Activated CD4-positive, alpha-beta T cell treated with anti-CD3 and anti-CD28 coated beads for 36 hours (primary cell): ENCODE measurements at regions of chr17 and their contacts with region 1.

Region 1: GRCh38 chr17:80892019-80892855 is 99.4 kb upstream of the CHMP6 start:
- DNase-seq: peak; percentile 94
- ATAC-seq: peak; percentile 78
- H3K4me3 Mint-ChIP-seq: peak overlapping the region; percentile 72
- H3K27ac Mint-ChIP-seq: peak overlapping the region; percentile 97
- H3K4me1 Mint-ChIP-seq: peaks cover 73% of the 10 kb centered on the region
- H3K27me3 Mint-ChIP-seq: no peaks in the 10 kb centered on the region

Region 2: DNA sequence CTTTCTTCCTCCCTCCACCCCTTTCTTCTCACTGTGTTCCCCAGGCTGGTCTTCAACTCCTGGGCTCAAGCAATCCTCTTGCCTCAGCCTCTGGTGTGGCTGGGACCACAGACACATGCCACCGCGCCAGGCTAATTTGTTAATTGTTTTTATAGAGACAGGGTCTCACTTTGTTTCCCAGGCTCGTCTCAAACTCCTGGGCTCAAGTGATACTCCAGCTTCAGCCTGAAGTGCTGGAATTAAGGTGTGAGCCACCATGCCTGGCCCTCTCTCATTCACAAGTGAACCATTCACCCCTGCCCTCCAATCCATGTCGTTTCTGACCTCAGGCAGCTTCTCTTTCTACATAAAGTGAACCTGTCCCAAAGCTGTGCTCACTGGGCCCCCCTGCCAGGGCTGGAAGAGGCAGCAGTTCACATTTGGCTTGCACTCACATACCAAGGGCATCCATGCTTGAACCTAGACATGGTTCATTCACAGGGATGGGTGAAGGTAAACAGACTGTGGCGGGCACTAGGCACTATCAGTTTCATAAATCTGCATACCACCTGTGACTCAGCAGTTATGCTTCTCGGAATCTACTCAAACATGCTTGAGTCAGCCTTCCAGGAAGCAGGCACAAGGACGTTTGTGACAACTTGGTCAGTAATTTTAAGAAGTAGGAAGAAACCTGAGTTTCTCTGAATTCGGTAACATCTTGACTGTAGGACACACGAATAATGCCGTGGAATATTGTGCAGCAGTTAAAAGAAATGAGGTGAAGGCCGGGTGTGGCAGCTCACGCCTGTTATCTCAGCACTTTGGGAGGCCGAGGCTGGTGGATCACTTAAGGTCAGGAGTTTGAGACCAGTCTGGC is 637.6 kb before region 1 on chr17:
- CTCF ChIA-PET with region 1: no interaction called
- POLR2A ChIA-PET with region 1: no interaction called
- intact Hi-C with region 1: loop called in 1 of 2 experiments (anchors 5 kb)
- DNase-seq: peak; percentile 83
- ATAC-seq: peak; percentile 62
- H3K4me3 Mint-ChIP-seq: peak overlapping the region; percentile 64
- H3K27ac Mint-ChIP-seq: peak overlapping the region; percentile 97
- H3K4me1 Mint-ChIP-seq: peaks cover 71% of the 10 kb centered on the region
- H3K27me3 Mint-ChIP-seq: no peaks in the 10 kb centered on the region

Region 3: GRCh38 chr17:80591788-80592187 is 300.4 kb before region 1 on chr17:
- CTCF ChIA-PET with region 1: no interaction called
- POLR2A ChIA-PET with region 1: no interaction called
- intact Hi-C with region 1: loop called in 1 of 2 experiments (anchors 2 kb)
- DNase-seq: no peak
- ATAC-seq: peak; percentile 56
- H3K4me3 Mint-ChIP-seq: no peak overlapping the region
- H3K27ac Mint-ChIP-seq: peak overlapping the region; percentile 28
- H3K4me1 Mint-ChIP-seq: peaks cover 68% of the 10 kb centered on the region
- H3K27me3 Mint-ChIP-seq: no peaks in the 10 kb centered on the region

Region 4: GRCh38 chr17:80649678-80650672 is 242.3 kb before region 1 on chr17:
- CTCF ChIA-PET with region 1: no interaction called
- POLR2A ChIA-PET with region 1: no interaction called
- intact Hi-C with region 1: loop called in 1 of 2 experiments (anchors 1 kb)
- DNase-seq: peak; percentile 92
- ATAC-seq: peak; percentile 85
- H3K4me3 Mint-ChIP-seq: peak overlapping the region; percentile 17
- H3K27ac Mint-ChIP-seq: peak overlapping the region; percentile 92
- H3K4me1 Mint-ChIP-seq: peaks cover 69% of the 10 kb centered on the region
- H3K27me3 Mint-ChIP-seq: no peaks in the 10 kb centered on the region

Region 5: DNA sequence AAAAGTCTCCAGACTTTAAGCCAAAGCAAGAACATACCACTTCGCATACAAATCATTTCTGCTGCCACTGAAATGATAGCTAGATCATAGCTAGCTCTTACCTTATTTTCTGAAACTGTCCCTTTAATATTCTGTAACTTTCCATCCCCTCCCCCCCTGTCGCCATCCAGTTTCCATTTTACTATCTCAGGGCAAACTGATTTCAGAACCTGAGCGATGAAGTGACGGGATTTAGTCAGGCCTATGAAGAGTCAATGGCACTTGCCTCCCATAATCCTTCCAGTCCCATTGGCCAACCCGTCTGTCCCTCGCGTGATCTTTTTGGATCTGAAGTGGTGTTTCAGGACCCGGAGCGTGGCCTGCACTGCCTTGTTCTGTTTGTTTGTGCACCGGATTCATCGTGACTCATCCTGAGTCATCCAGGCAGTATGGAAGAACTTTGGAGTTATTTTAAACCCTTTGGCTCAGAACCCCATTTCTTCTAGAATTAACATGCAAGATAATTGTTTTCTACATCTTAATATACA is 100.4 kb before region 1 on chr17:
- CTCF ChIA-PET with region 1: no interaction called
- POLR2A ChIA-PET with region 1: no interaction called
- intact Hi-C with region 1: loop called in 1 of 2 experiments (anchors 5 kb)
- DNase-seq: peak; percentile 76
- ATAC-seq: peak; percentile 65
- H3K4me3 Mint-ChIP-seq: peak overlapping the region; percentile 56
- H3K27ac Mint-ChIP-seq: peak overlapping the region; percentile 97
- H3K4me1 Mint-ChIP-seq: peaks cover 88% of the 10 kb centered on the region
- H3K27me3 Mint-ChIP-seq: no peaks in the 10 kb centered on the region

Region 6: GRCh38 chr17:80855948-80856862 is 36.0 kb before region 1 on chr17:
- CTCF ChIA-PET with region 1: interaction called, 6 read pairs
- POLR2A ChIA-PET with region 1: interaction called, 9 read pairs
- intact Hi-C with region 1: loop called (anchors 1 to 2 kb)
- DNase-seq: peak; percentile 95
- ATAC-seq: peak; percentile 98
- H3K4me3 Mint-ChIP-seq: peak overlapping the region; percentile 28
- H3K27ac Mint-ChIP-seq: peak overlapping the region; percentile 92
- H3K4me1 Mint-ChIP-seq: peaks cover 57% of the 10 kb centered on the region
- H3K27me3 Mint-ChIP-seq: no peaks in the 10 kb centered on the region

Region 7: GRCh38 chr17:81094509-81095382 is 202.5 kb after region 1 on chr17:
- CTCF ChIA-PET with region 1: no interaction called
- POLR2A ChIA-PET with region 1: no interaction called
- intact Hi-C with region 1: loop called in 1 of 2 experiments (anchors 1 kb)
- DNase-seq: peak; percentile 95
- ATAC-seq: peak; percentile 95
- H3K4me3 Mint-ChIP-seq: peak overlapping the region; percentile 26
- H3K27ac Mint-ChIP-seq: peak overlapping the region; percentile 60
- H3K4me1 Mint-ChIP-seq: peaks cover 43% of the 10 kb centered on the region
- H3K27me3 Mint-ChIP-seq: no peaks in the 10 kb centered on the region